Naive thymus-derived CD8-positive, alpha-beta T cell (primary cell): ENCODE measurements at regions of chr10 and their contacts with region 1.

Region 1: GRCh38 chr10:30783939-30784500 is 154.5 kb upstream of the LYZL2 start:
- DNase-seq: peak; percentile 72 to 93 (median 82)
- ATAC-seq: peak; percentile 84 to 90
- H3K4me3 Mint-ChIP-seq: peak overlapping the region; percentile 73 to 92 (median 85)
- H3K27ac Mint-ChIP-seq: peak overlapping the region; percentile 7 to 95 (median 90)
- H3K4me1 Mint-ChIP-seq: peaks cover 9 to 20% (median 16%) of the 10 kb centered on the region in 4 donors
- H3K27me3 Mint-ChIP-seq: no peaks in the 10 kb centered on the region

Region 2: GRCh38 chr10:30683496-30683895 is 100.5 kb before region 1 on chr10:
- POLR2A ChIA-PET with region 1: no interaction called
- DNase-seq: no peak
- ATAC-seq: no peak
- H3K4me3 Mint-ChIP-seq: no peak overlapping the region
- H3K27ac Mint-ChIP-seq: peak overlapping the region in 1 of 10 donors; percentile 47
- H3K4me1 Mint-ChIP-seq: peaks cover 0 to 12% (median 3%) of the 10 kb centered on the region in 4 donors
- H3K27me3 Mint-ChIP-seq: peaks cover 11 to 54% (median 25%) of the 10 kb centered on the region in 5 donors

Region 3: DNA sequence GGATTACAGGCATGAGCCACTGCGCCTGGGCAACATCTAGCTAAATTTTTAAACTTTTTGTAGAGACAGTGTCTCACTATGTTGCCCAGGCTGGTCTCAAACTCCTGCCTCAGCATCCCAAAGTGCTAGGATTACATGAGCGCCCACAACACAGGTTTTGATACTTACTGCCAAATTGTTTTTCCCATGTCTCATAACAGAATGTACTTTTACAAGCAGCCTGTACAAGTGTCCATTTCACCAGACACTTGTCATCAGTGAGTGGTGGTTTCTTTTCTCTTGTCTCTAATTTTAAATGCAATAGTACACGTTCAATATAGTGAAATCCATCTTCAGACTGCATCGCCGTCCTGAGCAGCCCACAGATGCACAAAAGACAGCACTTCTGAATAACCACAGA is 38.1 kb before region 1 on chr10:
- POLR2A ChIA-PET with region 1: no interaction called
- DNase-seq: no peak
- ATAC-seq: no peak
- H3K4me3 Mint-ChIP-seq: no peak overlapping the region
- H3K27ac Mint-ChIP-seq: no peak overlapping the region
- H3K4me1 Mint-ChIP-seq: peaks cover 0 to 8% (median 6%) of the 10 kb centered on the region in 4 donors
- H3K27me3 Mint-ChIP-seq: peaks cover 0 to 5% (median 1%) of the 10 kb centered on the region in 5 donors

Region 4: DNA sequence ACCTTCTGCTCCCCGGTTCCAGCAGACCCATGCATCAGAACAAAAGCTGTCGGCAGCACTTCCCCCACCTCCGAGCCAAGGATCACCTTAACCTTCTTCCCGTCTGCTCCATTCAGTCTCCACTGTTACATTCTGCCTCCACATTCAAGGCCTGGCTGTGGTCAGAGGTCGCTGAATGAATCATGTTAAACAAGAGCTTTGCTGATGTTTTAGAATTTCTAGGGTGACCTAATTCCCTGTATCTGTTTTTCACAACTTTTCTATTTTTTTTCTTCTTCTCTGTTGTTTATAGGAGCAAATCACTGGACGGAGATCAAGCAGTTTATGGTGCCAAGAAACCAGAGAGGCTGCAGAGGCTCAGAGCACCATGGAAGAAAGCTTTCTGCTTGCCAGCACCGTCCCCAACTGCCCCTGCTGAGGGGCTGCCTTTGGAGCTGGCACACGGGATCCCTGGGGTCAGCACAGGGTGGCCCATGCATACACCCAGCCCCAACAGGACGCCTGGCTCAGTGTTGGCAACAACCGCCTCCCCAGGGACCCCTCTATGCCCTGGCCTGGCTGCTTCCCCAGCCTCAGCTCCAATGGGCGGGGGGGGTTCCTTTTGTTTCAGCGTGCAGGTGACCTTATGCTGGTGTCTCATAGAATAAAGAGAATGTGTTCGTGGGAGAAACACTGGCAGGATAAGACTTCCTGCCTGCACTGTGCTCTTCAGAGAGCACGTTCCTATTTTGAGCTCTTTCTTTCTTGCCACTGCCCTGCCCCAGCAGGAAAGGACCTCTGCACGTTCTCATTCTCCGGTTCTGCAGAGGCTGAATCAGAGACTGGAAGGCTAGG is 28.2 kb after region 1 on chr10:
- POLR2A ChIA-PET with region 1: interaction called, 30 read pairs
- DNase-seq: no peak
- ATAC-seq: peak; percentile 33 to 55
- H3K4me3 Mint-ChIP-seq: peak overlapping the region in 9 of 10 donors; percentile 8 to 63 (median 43)
- H3K27ac Mint-ChIP-seq: peak overlapping the region in 9 of 10 donors; percentile 6 to 85 (median 72)
- H3K4me1 Mint-ChIP-seq: peaks cover 7 to 27% (median 23%) of the 10 kb centered on the region in 4 donors
- H3K27me3 Mint-ChIP-seq: no peaks in the 10 kb centered on the region

Region 5: GRCh38 chr10:30846710-30847109 is 62.7 kb after region 1 on chr10:
- POLR2A ChIA-PET with region 1: interaction called, 11 read pairs
- DNase-seq: no peak
- ATAC-seq: no peak
- H3K4me3 Mint-ChIP-seq: no peak overlapping the region
- H3K27ac Mint-ChIP-seq: no peak overlapping the region
- H3K4me1 Mint-ChIP-seq: peaks cover 6 to 16% (median 12%) of the 10 kb centered on the region in 4 donors
- H3K27me3 Mint-ChIP-seq: no peaks in the 10 kb centered on the region

Region 6: GRCh38 chr10:30928742-30929141 is 144.7 kb after region 1 on chr10:
- POLR2A ChIA-PET with region 1: interaction called, 13 read pairs
- DNase-seq: peak in 3 of 10 donors; percentile 4 to 19 (median 11)
- ATAC-seq: peak in 1 of 2 donors; percentile 64
- H3K4me3 Mint-ChIP-seq: peak overlapping the region; percentile 76 to 94 (median 84)
- H3K27ac Mint-ChIP-seq: peak overlapping the region; percentile 88 to 96 (median 92)
- H3K4me1 Mint-ChIP-seq: peaks cover 9 to 15% (median 12%) of the 10 kb centered on the region in 4 donors
- H3K27me3 Mint-ChIP-seq: no peaks in the 10 kb centered on the region

Region 7: GRCh38 chr10:31031558-31032257 is 247.7 kb after region 1 on chr10 and contains the start of gene ZNF438:
- POLR2A ChIA-PET with region 1: interaction called, 42 read pairs
- DNase-seq: peak; percentile 91 to 98 (median 96)
- ATAC-seq: peak; percentile 78 to 80
- H3K4me3 Mint-ChIP-seq: peak within 1 kb of the TSS; percentile 84 to 97 (median 92)
- H3K27ac Mint-ChIP-seq: peak within 1 kb of the TSS; percentile 91 to 100 (median 99)
- H3K4me1 Mint-ChIP-seq: peaks cover 5 to 20% (median 17%) of the 10 kb centered on the region in 4 donors
- H3K27me3 Mint-ChIP-seq: peaks cover 0 to 2% (median 0%) of the 10 kb centered on the region in 5 donors
- polyA plus RNA-seq, gene ZNF438: 2.3 to 6.0 (median 3.9) TPM

Region 8: DNA sequence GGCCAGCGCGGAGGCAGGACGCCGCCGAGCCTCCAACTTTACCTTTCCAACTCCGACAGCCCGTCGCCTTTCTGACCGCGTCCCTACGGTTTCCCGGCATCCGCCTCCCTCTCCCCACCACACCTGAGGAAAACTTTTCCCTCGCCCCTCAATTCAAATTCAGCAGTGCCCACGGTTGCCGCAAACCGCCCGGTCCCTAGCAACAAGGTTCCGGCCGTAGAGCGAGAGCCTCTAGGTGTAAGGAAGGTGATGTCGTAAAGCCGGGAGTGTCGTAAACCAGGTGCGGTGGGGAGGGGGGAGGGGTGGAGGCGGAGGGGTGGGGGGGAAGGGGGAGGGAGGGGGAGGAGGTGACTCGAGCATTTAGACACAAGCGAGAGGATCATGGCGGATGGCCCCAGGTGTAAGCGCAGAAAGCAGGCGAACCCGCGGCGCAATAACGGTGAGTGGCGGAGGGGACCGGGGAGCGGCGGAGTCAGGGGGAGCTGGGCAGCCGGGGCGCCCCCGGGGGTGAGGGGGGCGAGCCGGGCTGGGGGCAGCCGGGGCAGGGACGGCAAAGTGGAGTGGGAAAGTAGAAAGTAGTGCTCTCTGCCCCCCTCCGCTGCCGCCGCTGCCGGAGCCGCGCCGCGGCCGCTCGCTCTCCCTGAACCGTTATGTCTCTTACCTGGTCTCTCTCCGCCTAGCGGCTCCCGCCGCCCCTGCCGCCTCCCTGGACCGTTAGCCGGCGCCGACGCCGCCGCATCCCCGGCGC is 535.0 kb after region 1 on chr10 and contains the start of gene ZEB1:
- POLR2A ChIA-PET with region 1: interaction called, 20 read pairs
- DNase-seq: peak; percentile 84 to 98 (median 92)
- ATAC-seq: peak; percentile 36 to 54
- H3K4me3 Mint-ChIP-seq: peak within 1 kb of the TSS; percentile 85 to 99 (median 98)
- H3K27ac Mint-ChIP-seq: peak within 1 kb of the TSS; percentile 97 to 100 (median 98)
- H3K4me1 Mint-ChIP-seq: peaks cover 17 to 57% (median 36%) of the 10 kb centered on the region in 4 donors
- H3K27me3 Mint-ChIP-seq: peaks cover 0 to 2% (median 0%) of the 10 kb centered on the region in 5 donors
- polyA plus RNA-seq, gene ZEB1: 25.2 to 35.6 (median 27.2) TPM